Ascending aorta (tissue), 2 donors: ENCODE measurements at regions of chr12 and their contacts with region 1.

Region 1: DNA sequence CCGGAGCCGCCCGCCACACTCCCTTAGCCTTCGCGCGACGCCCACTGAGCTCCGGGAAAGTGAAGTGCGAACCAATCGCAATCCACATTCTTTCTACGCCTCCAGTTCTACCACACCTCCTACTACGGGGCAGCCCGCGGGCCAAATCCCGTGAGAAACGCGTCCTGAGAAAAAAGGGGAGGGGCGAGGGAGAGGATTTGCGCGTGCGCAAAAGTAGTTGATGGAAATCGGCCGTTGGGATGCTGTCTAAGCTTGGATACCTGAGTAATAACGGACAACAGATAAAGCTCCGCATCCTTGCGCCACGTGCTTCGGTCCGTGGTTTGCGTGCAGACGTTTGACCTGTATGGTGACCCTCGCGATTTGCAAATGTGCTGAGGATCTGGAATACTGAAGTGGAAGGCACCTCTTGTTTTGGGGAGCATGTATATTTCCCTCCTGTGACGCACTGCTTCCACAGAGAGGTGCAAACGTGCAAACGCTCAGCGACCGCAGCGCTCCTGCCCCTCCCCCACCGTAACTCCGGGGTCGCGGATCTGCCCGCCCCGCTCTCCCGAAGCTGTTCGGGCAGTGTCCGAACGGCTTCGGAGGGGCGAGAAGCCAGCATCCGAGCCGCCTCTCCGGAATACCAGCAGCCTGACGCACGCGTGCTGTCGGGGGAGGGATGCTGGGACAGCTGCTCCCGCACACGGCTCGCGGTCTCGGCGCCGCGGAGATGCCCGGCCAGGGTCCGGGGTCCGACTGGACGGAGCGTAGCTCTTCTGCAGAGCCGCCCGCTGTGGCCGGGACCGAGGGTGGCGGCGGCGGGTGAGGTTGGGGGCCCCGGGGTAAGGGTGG is at the starts of genes FAM216A and GPN3:
- DNase-seq: peak; percentile 87 to 98
- H3K4me3 ChIP-seq: peak within 1 kb of the TSS; percentile 73 to 84
- H3K27ac ChIP-seq: peak within 1 kb of the TSS; percentile 88 to 92
- H3K4me1 ChIP-seq: peaks cover 6 to 17% of the 10 kb centered on the region in 2 donors
- H3K27me3 ChIP-seq: no peaks in the 10 kb centered on the region
- CTCF ChIP-seq: no peak
- total RNA-seq, gene FAM216A: 2.1 TPM
- total RNA-seq, gene GPN3: 5.6 TPM

Region 2: DNA sequence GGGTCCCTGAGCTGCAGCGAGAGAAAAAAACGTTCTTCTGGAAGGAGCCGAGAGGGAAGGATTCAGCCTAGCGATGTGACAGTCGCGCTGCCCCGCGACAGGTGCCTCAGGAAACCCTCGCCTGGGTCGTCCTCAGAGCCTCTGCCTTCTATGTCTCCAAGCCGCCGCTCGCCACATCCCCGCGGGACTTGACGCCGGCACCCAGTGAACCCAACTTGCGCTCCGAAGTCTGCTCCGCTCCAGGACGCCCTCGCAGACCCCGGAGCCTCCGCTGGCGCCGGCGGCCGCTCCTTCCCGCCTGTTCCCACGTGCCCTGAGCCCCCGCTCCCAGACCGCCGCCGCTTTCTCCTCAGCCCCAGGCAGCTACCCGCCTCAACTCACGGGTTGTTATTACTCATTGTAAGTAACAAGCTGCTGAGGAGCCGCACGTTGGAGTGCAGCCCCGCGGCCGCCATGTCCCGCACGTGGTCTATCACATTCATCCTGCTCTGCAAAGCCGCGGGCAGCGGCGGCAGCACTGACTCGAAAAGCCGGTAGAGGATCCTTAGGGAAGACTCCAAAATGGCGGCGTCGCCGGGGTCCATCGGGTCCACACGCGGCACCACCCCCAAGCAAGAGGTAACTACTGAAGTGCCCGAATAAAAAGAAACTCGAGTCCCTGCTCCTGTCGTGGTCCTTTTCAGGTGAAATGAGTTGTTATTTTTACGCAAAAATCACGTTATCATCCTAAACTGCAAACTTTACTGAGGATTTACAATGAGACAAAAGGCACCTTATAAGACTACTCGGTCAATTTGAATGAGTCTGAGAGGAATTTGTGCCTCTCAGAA is 65.1 kb before region 1 on chr12 and contains the start of gene ANAPC7:
- intact Hi-C with region 1: loop called (anchors 2 kb)
- DNase-seq: peak; percentile 51 to 94
- H3K4me3 ChIP-seq: peak within 1 kb of the TSS; percentile 81 to 84
- H3K27ac ChIP-seq: peak within 1 kb of the TSS; percentile 84 to 93
- H3K4me1 ChIP-seq: peaks cover 0 to 8% of the 10 kb centered on the region in 2 donors
- H3K27me3 ChIP-seq: no peaks in the 10 kb centered on the region
- CTCF ChIP-seq: peak in 1 of 3 experiments; percentile 19
- total RNA-seq, gene ANAPC7: 34.7 TPM

Region 3: GRCh38 chr12:110449799-110450497 is 18.5 kb before region 1 on chr12 and contains the start of gene ARPC3:
- intact Hi-C with region 1: loop called (anchors 1 kb)
- DNase-seq: peak; percentile 76 to 98
- H3K4me3 ChIP-seq: peak within 1 kb of the TSS; percentile 92 to 96
- H3K27ac ChIP-seq: peak within 1 kb of the TSS; percentile 92 to 98
- H3K4me1 ChIP-seq: peaks cover 4 to 17% of the 10 kb centered on the region in 2 donors
- H3K27me3 ChIP-seq: no peaks in the 10 kb centered on the region
- CTCF ChIP-seq: peak; percentile 90 to 95 (median 92)
- total RNA-seq, gene ARPC3: 76.5 TPM

Region 4: GRCh38 chr12:110501752-110502738 is 33.6 kb after region 1 on chr12 and contains the starts of genes RAD9B and VPS29:
- intact Hi-C with region 1: loop called (anchors 1 kb)
- DNase-seq: peak; percentile 96 to 99
- H3K4me3 ChIP-seq: peak within 1 kb of the TSS; percentile 75 to 82
- H3K27ac ChIP-seq: peak within 1 kb of the TSS; percentile 92
- H3K4me1 ChIP-seq: peaks cover 7 to 21% of the 10 kb centered on the region in 2 donors
- H3K27me3 ChIP-seq: no peaks in the 10 kb centered on the region
- CTCF ChIP-seq: no peak
- total RNA-seq, gene RAD9B: not detected
- total RNA-seq, gene VPS29: 35.9 TPM

Region 5: GRCh38 chr12:110600254-110600653 is 131.8 kb after region 1 on chr12:
- intact Hi-C with region 1: loop called (anchors 1 kb)
- DNase-seq: no peak
- H3K4me3 ChIP-seq: no peak overlapping the region
- H3K27ac ChIP-seq: no peak overlapping the region
- H3K4me1 ChIP-seq: no peaks in the 10 kb centered on the region
- H3K27me3 ChIP-seq: no peaks in the 10 kb centered on the region
- CTCF ChIP-seq: peak; percentile 47 to 54 (median 48)